ENCODE measurements at regions of chr13 and their contacts with region 1.

Region 1: GRCh38 chr13:40388617-40389016 is 277.8 kb downstream of the FOXO1 start:
- DNase-seq: peak; percentile 83 to 93 (median 88)
- H3K4me3 ChIP-seq: peak overlapping the region in 1 of 2 donors; percentile 85
- H3K4me3 Mint-ChIP-seq: peak overlapping the region; percentile 83 to 92 (median 90)
- H3K27ac ChIP-seq: peak overlapping the region; percentile 95
- H3K27ac Mint-ChIP-seq: peak overlapping the region; percentile 89 to 100 (median 99)
- H3K4me1 ChIP-seq: peaks cover 34% of the 10 kb centered on the region
- H3K4me1 Mint-ChIP-seq: peaks cover 31 to 58% (median 39%) of the 10 kb centered on the region in 4 donors
- H3K27me3 ChIP-seq: no peaks in the 10 kb centered on the region
- H3K27me3 Mint-ChIP-seq: no peaks in the 10 kb centered on the region

Region 2: GRCh38 chr13:40206241-40207000 is 182.2 kb before region 1 on chr13:
- CTCF ChIA-PET with region 1: no interaction called
- POLR2A ChIA-PET with region 1: interaction called, 18 read pairs
- intact Hi-C with region 1: no loop called
- DNase-seq: peak; percentile 56 to 70 (median 65)
- H3K4me3 ChIP-seq: peak overlapping the region in 1 of 2 donors; percentile 21
- H3K4me3 Mint-ChIP-seq: peak overlapping the region; percentile 46 to 89 (median 78)
- H3K27ac ChIP-seq: peak overlapping the region; percentile 53
- H3K27ac Mint-ChIP-seq: peak overlapping the region; percentile 90 to 99 (median 98)
- H3K4me1 ChIP-seq: peaks cover 60% of the 10 kb centered on the region
- H3K4me1 Mint-ChIP-seq: peaks cover 47 to 81% (median 61%) of the 10 kb centered on the region in 4 donors
- H3K27me3 ChIP-seq: no peaks in the 10 kb centered on the region
- H3K27me3 Mint-ChIP-seq: no peaks in the 10 kb centered on the region

Region 3: DNA sequence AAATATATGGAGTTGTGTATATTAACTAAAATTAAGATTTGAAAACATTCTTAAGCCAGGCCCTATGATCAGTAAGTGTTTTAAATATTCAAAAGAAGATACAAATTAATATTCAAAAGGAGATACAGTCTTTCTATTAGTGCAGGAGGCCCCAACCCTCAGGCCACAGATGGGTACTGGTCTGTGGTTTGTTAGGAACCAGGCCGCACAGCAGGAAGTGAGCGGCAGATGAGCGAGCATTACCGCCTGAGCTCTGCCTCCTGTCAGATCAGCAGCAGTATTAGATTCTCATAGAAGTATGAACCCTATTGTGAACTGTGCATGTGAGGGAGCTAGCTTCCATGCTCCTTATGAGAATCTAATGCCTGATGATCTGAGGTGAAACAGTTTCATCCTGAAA is 45.0 kb after region 1 on chr13:
- CTCF ChIA-PET with region 1: interaction called, 5 read pairs
- POLR2A ChIA-PET with region 1: interaction called, 13 read pairs
- intact Hi-C with region 1: no loop called
- DNase-seq: peak; percentile 31 to 53 (median 50)
- H3K4me3 ChIP-seq: no peak overlapping the region
- H3K4me3 Mint-ChIP-seq: peak overlapping the region in 6 of 8 donors; percentile 12 to 80 (median 56)
- H3K27ac ChIP-seq: no peak overlapping the region
- H3K27ac Mint-ChIP-seq: peak overlapping the region; percentile 22 to 87 (median 82)
- H3K4me1 ChIP-seq: peaks cover 54% of the 10 kb centered on the region
- H3K4me1 Mint-ChIP-seq: peaks cover 38 to 62% (median 43%) of the 10 kb centered on the region in 4 donors
- H3K27me3 ChIP-seq: no peaks in the 10 kb centered on the region
- H3K27me3 Mint-ChIP-seq: no peaks in the 10 kb centered on the region

Region 4: DNA sequence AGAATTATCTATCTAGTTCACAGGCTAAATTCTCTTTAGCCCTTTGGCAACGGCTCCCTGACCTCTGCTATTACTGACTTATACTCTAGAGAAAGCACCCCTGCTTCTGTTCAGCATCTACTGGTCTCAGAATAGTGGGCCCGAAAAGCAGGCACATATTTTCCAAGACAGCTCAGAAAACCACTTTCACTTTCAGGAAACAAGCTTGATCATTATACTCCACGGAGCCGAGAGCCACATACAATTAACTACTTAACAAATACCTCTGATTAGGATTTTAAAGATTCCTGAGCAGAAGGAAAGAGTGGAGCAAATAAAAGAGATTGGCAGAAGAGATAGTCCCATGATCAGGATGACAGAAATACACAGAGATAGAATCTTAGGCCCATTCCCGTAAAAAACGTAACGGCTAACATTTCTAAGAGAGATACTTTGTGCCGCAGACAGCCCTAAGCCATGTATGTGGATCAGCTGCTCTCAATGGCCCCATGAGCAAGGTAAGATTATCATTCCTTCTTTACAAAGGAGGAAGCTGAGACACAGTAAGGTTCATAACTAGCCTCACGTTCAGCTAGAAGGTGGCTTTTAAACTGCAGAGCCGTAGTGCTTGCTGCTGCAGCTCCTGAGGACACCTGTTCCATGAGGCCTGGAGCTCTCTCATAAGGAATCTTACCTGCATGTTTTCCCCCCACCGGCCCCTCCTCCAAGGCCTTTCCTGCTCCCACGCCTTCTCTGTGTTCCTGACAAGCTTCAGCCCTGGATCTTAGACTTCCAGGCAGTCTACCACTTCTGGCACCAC is 50.6 kb after region 1 on chr13:
- CTCF ChIA-PET with region 1: interaction called, 5 read pairs
- POLR2A ChIA-PET with region 1: interaction called, 13 read pairs
- intact Hi-C with region 1: no loop called
- DNase-seq: peak in 2 of 5 donors; percentile 22 to 29
- H3K4me3 ChIP-seq: no peak overlapping the region
- H3K4me3 Mint-ChIP-seq: peak overlapping the region; percentile 58 to 87 (median 80)
- H3K27ac ChIP-seq: no peak overlapping the region
- H3K27ac Mint-ChIP-seq: peak overlapping the region; percentile 8 to 89 (median 77)
- H3K4me1 ChIP-seq: peaks cover 45% of the 10 kb centered on the region
- H3K4me1 Mint-ChIP-seq: peaks cover 28 to 48% (median 34%) of the 10 kb centered on the region in 4 donors
- H3K27me3 ChIP-seq: no peaks in the 10 kb centered on the region
- H3K27me3 Mint-ChIP-seq: no peaks in the 10 kb centered on the region

Region 5: DNA sequence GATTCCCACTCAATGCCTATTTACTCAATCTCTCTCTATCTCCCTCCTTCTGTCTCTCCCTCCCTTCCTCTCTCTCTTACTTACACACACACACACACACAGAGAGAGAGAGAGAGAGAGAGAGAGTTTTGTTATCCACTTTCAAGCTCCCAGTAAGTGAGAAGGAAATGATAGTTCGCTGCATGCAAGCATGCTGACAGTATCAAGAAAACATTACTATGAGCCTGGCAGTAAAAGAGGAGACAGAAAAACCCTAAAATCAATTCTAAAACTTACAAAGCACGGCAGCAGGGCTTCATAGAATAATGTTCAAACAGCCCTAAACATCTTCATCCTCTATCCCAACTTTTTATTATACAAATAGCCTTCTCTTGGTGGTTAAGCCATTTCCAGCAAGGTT is 105.9 kb after region 1 on chr13:
- CTCF ChIA-PET with region 1: no interaction called
- POLR2A ChIA-PET with region 1: interaction called, 7 read pairs
- intact Hi-C with region 1: loop called (anchors 2 kb)
- DNase-seq: peak in 3 of 5 donors; percentile 37 to 54 (median 49)
- H3K4me3 ChIP-seq: peak overlapping the region in 1 of 2 donors; percentile 33
- H3K4me3 Mint-ChIP-seq: peak overlapping the region; percentile 71 to 92 (median 84)
- H3K27ac ChIP-seq: peak overlapping the region; percentile 38
- H3K27ac Mint-ChIP-seq: peak overlapping the region; percentile 90 to 98 (median 94)
- H3K4me1 ChIP-seq: peaks cover 74% of the 10 kb centered on the region
- H3K4me1 Mint-ChIP-seq: peaks cover 70 to 92% (median 80%) of the 10 kb centered on the region in 4 donors
- H3K27me3 ChIP-seq: no peaks in the 10 kb centered on the region
- H3K27me3 Mint-ChIP-seq: no peaks in the 10 kb centered on the region

Measured in CD4-positive, alpha-beta memory T cell (primary cell).